ENCODE measurements at regions of chr1 and their contacts with region 1.

Region 1: GRCh38 chr1:46477153-46477929 is 12.3 kb upstream of the DMBX1 start:
- DNase-seq: peak; percentile 63 to 91 (median 79)
- H3K4me3 ChIP-seq: no peak overlapping the region
- H3K27ac ChIP-seq: no peak overlapping the region
- H3K4me1 ChIP-seq: no peaks in the 10 kb centered on the region
- H3K27me3 ChIP-seq: no peaks in the 10 kb centered on the region
- CTCF ChIP-seq: peak; percentile 82 to 91 (median 88)
- POLR2A ChIP-seq: no peak

Region 2: DNA sequence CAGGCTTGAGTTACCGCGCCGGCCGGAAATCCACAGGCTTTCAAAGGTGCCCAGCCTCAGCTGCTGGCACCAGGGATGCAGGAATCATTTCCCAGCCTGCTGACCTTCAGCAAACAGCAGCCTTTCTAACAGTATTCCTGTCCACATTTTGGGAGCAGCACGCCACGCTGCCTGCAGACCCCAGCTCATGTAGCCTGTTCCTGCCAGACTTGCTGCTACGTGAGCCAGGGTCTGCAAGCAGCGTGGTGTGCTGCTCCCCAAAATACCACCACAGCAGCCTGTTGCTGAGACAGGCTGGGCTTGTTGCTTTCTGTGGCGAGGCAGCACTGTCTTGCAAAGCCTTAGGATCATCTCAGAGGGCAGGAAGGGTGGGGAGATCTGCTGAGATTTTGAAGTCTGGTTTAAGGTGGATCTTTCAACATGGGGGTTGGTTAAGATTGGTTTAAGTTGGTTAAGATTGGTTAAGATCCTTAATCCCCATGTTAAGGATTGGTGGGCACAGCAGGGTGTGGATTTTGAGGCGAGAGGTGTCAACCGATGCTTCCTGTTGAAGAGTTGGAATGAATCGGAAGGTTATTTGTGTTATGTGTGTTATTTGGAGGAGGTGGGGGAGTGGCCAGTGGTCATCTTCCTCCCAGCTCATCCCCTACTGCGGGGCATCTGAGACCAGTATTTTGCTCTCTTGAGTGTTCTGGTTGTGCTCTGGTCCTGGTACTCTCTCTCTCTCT is 70.3 kb before region 1 on chr1:
- intact Hi-C with region 1: loop called in 1 of 2 experiments (anchors 2 kb)
- DNase-seq: peak in 3 of 7 donors; percentile 29 to 50 (median 42)
- H3K4me3 ChIP-seq: peak overlapping the region in 1 of 4 donors; percentile 33
- H3K27ac ChIP-seq: peak overlapping the region in 2 of 5 donors; percentile 46 to 81
- H3K4me1 ChIP-seq: peaks cover 12 to 28% of the 10 kb centered on the region in 2 donors
- H3K27me3 ChIP-seq: no peaks in the 10 kb centered on the region
- CTCF ChIP-seq: no peak
- POLR2A ChIP-seq: no peak

Region 3: DNA sequence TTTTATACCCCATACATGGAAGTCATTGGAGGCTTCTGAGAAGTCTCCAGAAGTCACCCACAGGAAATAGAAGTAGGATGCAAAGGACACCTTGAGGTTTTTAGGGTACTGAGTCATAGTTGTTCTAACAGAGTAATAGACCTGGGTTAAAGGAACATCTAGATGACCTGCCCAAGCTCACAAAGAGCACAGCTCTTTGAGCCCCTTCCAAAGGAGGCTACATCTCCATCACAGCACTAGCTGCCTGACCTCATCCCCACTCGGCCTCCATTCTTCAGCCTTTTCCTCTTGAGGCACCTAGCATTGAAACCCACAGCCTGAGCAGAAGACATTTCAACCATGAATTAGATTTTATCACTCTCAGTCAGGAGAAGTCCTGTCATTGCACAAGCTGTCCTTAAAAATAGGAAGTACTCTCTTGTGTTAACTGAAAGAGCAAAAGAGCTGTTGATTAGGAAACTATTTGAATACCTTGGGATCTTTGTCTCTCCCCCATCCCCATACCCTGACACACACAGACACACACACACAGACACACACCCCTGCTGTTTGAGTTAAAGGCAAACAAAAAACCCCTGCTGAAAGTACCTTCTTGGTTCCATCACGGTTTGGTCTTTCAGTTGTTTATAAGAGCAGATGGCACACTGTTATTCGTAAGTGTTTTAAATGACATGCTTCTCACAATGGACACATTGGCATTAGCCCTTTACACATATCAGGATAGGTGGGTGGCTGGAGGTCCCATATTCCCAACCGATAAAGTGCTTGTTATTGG is 104.5 kb after region 1 on chr1:
- intact Hi-C with region 1: no loop called
- DNase-seq: no peak
- H3K4me3 ChIP-seq: no peak overlapping the region
- H3K27ac ChIP-seq: peak overlapping the region in 2 of 5 donors; percentile 28 to 73
- H3K4me1 ChIP-seq: peaks cover 0 to 24% of the 10 kb centered on the region in 2 donors
- H3K27me3 ChIP-seq: no peaks in the 10 kb centered on the region
- CTCF ChIP-seq: no peak
- POLR2A ChIP-seq: no peak

Measured in adrenal gland (tissue), 19 donors.